Caco-2 (cell line): ENCODE measurements at regions of chr20 and their contacts with region 1.

Region 1: GRCh38 chr20:40689943-40690835 is 1.2 kb upstream of the MAFB start:
- DNase-seq: peak; percentile 92 to 96
- H3K4me3 ChIP-seq: peak overlapping the region; percentile 68
- H3K4me3 Mint-ChIP-seq: peak overlapping the region; percentile 81
- H3K27ac Mint-ChIP-seq: peak overlapping the region; percentile 38
- H3K4me1 ChIP-seq: peaks cover 14% of the 10 kb centered on the region
- H3K4me1 Mint-ChIP-seq: no peaks in the 10 kb centered on the region
- H3K27me3 ChIP-seq: peaks cover 14% of the 10 kb centered on the region
- H3K27me3 Mint-ChIP-seq: peaks cover 47% of the 10 kb centered on the region
- CTCF ChIP-seq: peak; percentile 99

Region 2: GRCh38 chr20:40160097-40160550 is 530.1 kb before region 1 on chr20:
- CTCF ChIA-PET with region 1: interaction called, 13 read pairs
- POLR2A ChIA-PET with region 1: no interaction called
- intact Hi-C with region 1: loop called (anchors 1 kb)
- DNase-seq: peak; percentile 80 to 84
- H3K4me3 ChIP-seq: no peak overlapping the region
- H3K4me3 Mint-ChIP-seq: peak overlapping the region; percentile 22
- H3K27ac Mint-ChIP-seq: no peak overlapping the region
- H3K4me1 ChIP-seq: no peaks in the 10 kb centered on the region
- H3K4me1 Mint-ChIP-seq: no peaks in the 10 kb centered on the region
- H3K27me3 ChIP-seq: no peaks in the 10 kb centered on the region
- H3K27me3 Mint-ChIP-seq: peaks cover 3% of the 10 kb centered on the region
- CTCF ChIP-seq: peak; percentile 98 to 99

Region 3: GRCh38 chr20:40442181-40442963 is 247.8 kb before region 1 on chr20:
- CTCF ChIA-PET with region 1: no interaction called
- POLR2A ChIA-PET with region 1: no interaction called
- intact Hi-C with region 1: loop called (anchors 10 kb)
- DNase-seq: peak in 1 of 2 experiments; percentile 52
- H3K4me3 ChIP-seq: no peak overlapping the region
- H3K4me3 Mint-ChIP-seq: no peak overlapping the region
- H3K27ac Mint-ChIP-seq: no peak overlapping the region
- H3K4me1 ChIP-seq: no peaks in the 10 kb centered on the region; the same call in 1 of the 2 replicates
- H3K4me1 Mint-ChIP-seq: no peaks in the 10 kb centered on the region
- H3K27me3 ChIP-seq: no peaks in the 10 kb centered on the region; the same call in 1 of the 2 replicates
- H3K27me3 Mint-ChIP-seq: no peaks in the 10 kb centered on the region
- CTCF ChIP-seq: peak; percentile 48 to 56

Region 4: GRCh38 chr20:40648210-40649072 is 41.7 kb before region 1 on chr20:
- CTCF ChIA-PET with region 1: interaction called, 13 read pairs
- POLR2A ChIA-PET with region 1: interaction called, 3 read pairs
- intact Hi-C with region 1: no loop called
- DNase-seq: no peak
- H3K4me3 ChIP-seq: no peak overlapping the region
- H3K4me3 Mint-ChIP-seq: no peak overlapping the region
- H3K27ac Mint-ChIP-seq: no peak overlapping the region
- H3K4me1 ChIP-seq: no peaks in the 10 kb centered on the region
- H3K4me1 Mint-ChIP-seq: no peaks in the 10 kb centered on the region
- H3K27me3 ChIP-seq: no peaks in the 10 kb centered on the region; the same call in 1 of the 2 replicates
- H3K27me3 Mint-ChIP-seq: peaks cover 3% of the 10 kb centered on the region
- CTCF ChIP-seq: no peak

Region 5: DNA sequence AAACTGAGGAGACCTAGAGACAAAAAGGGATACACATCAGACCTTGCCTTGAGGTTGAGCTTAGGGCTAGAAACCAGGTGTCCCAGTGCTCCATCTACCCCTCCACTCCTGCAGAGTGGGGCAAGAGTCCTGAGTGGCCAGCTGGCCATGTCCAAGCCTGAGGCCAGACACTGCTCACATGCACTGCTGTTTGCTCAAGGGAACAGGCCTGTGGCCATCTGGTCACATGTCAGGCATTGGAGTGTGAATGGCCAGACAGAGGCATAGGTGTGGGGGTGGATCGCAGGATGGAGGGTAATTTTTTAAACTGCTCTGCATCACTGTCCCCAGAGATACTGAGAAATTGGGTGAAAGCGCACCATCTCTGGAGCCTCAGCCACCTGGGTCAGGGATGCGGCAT is 31.7 kb before region 1 on chr20:
- CTCF ChIA-PET with region 1: no interaction called
- POLR2A ChIA-PET with region 1: no interaction called
- intact Hi-C with region 1: no loop called
- DNase-seq: no peak
- H3K4me3 ChIP-seq: no peak overlapping the region
- H3K4me3 Mint-ChIP-seq: no peak overlapping the region
- H3K27ac Mint-ChIP-seq: no peak overlapping the region
- H3K4me1 ChIP-seq: peaks cover 2% of the 10 kb centered on the region; the same call in 1 of the 2 replicates
- H3K4me1 Mint-ChIP-seq: peaks cover 3% of the 10 kb centered on the region
- H3K27me3 ChIP-seq: no peaks in the 10 kb centered on the region
- H3K27me3 Mint-ChIP-seq: peaks cover 7% of the 10 kb centered on the region
- CTCF ChIP-seq: no peak

Region 6: GRCh38 chr20:40706977-40707582 is 16.9 kb after region 1 on chr20:
- CTCF ChIA-PET with region 1: interaction called, 33 read pairs
- POLR2A ChIA-PET with region 1: interaction called, 7 read pairs
- intact Hi-C with region 1: no loop called
- DNase-seq: peak; percentile 91 to 92
- H3K4me3 ChIP-seq: no peak overlapping the region
- H3K4me3 Mint-ChIP-seq: peak overlapping the region; percentile 12
- H3K27ac Mint-ChIP-seq: peak overlapping the region; percentile 3
- H3K4me1 ChIP-seq: peaks cover 19% of the 10 kb centered on the region
- H3K4me1 Mint-ChIP-seq: peaks cover 10% of the 10 kb centered on the region
- H3K27me3 ChIP-seq: peaks cover 3% of the 10 kb centered on the region; the same call in 1 of the 2 replicates
- H3K27me3 Mint-ChIP-seq: peaks cover 17% of the 10 kb centered on the region
- CTCF ChIP-seq: peak; percentile 67 to 94